ENCODE measurements at regions of chr7 and their contacts with region 1.

Region 1: GRCh38 chr7:6167004-6167551 is 105.3 kb downstream of the CYTH3 start:
- DNase-seq: peak in 4 of 5 donors; percentile 55 to 71 (median 63)
- ATAC-seq: peak; percentile 45 to 75 (median 64)
- H3K4me3 ChIP-seq: no peak overlapping the region
- H3K27ac ChIP-seq: peak overlapping the region in 11 of 12 donors; percentile 14 to 80 (median 68)
- H3K4me1 ChIP-seq: peaks cover 3 to 79% (median 36%) of the 10 kb centered on the region in 12 donors
- H3K27me3 ChIP-seq: no peaks in the 10 kb centered on the region
- CTCF ChIP-seq: no peak
- POLR2A ChIP-seq: no peak

Region 2: DNA sequence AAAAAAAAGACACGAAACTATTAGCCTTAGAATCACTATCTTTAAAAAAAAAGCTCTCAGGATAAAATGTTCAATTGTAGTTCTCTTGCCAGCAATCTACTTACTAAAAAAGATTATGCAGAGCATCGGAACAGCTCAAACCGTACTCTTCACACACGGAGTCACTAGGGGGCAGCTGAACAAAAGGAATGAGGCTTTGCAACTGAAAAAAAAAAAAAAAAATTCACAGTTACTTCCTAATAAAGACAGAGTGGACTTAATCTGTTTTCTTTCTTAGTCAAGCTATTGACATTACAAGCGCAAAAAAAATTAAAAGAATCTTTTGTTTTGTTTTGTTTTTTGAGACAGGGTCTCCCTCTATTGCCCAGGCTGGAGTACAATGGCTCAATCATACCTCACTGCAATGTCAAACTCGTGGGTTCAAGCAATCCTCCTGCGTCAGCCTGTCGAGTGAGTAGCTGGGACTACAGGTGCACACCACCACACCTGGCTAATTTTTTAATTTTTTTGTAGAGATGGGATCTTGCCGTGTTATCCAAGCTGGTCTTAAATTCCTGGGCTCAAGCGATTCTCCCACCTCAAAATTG is 169.8 kb before region 1 on chr7:
- intact Hi-C with region 1: no loop called
- DNase-seq: peak in 4 of 5 donors; percentile 24 to 45 (median 35)
- ATAC-seq: peak in 3 of 4 donors; percentile 70 to 76 (median 71)
- H3K4me3 ChIP-seq: no peak overlapping the region
- H3K27ac ChIP-seq: no peak overlapping the region
- H3K4me1 ChIP-seq: peaks cover 0 to 3% (median 0%) of the 10 kb centered on the region in 12 donors
- H3K27me3 ChIP-seq: no peaks in the 10 kb centered on the region
- CTCF ChIP-seq: peak; percentile 31 to 79 (median 66)
- POLR2A ChIP-seq: no peak

Region 3: GRCh38 chr7:6260291-6261187 is 93.5 kb after region 1 on chr7:
- intact Hi-C with region 1: loop called in 2 of 10 experiments (anchors 5 kb)
- DNase-seq: peak in 2 of 5 donors; percentile 34 to 46
- ATAC-seq: peak in 2 of 4 donors; percentile 27 to 28
- H3K4me3 ChIP-seq: no peak overlapping the region
- H3K27ac ChIP-seq: peak overlapping the region; percentile 41 to 83 (median 70)
- H3K4me1 ChIP-seq: peaks cover 10 to 86% (median 68%) of the 10 kb centered on the region in 12 donors
- H3K27me3 ChIP-seq: no peaks in the 10 kb centered on the region
- CTCF ChIP-seq: no peak
- POLR2A ChIP-seq: no peak

Measured in heart left ventricle (tissue), 16 donors.